ENCODE measurements at regions of chr2 and their contacts with region 1.

Region 1: GRCh38 chr2:84495539-84496146 is 20.7 kb upstream of the DNAH6 start:
- DNase-seq: no peak
- H3K4me3 ChIP-seq: no peak overlapping the region
- H3K27ac ChIP-seq: no peak overlapping the region
- H3K4me1 ChIP-seq: no peaks in the 10 kb centered on the region
- H3K27me3 ChIP-seq: no peaks in the 10 kb centered on the region
- CTCF ChIP-seq: peak; percentile 39 to 60 (median 47)

Region 2: GRCh38 chr2:83900862-83901261 is 594.8 kb before region 1 on chr2:
- intact Hi-C with region 1: no loop called
- DNase-seq: no peak
- H3K4me3 ChIP-seq: no peak overlapping the region
- H3K27ac ChIP-seq: no peak overlapping the region
- H3K4me1 ChIP-seq: no peaks in the 10 kb centered on the region
- H3K27me3 ChIP-seq: no peaks in the 10 kb centered on the region
- CTCF ChIP-seq: no peak

Region 3: GRCh38 chr2:84532291-84532690 is 36.6 kb after region 1 on chr2:
- intact Hi-C with region 1: no loop called
- DNase-seq: no peak
- H3K4me3 ChIP-seq: no peak overlapping the region
- H3K27ac ChIP-seq: no peak overlapping the region
- H3K4me1 ChIP-seq: no peaks in the 10 kb centered on the region
- H3K27me3 ChIP-seq: no peaks in the 10 kb centered on the region
- CTCF ChIP-seq: no peak

Region 4: GRCh38 chr2:84631047-84631446 is 135.4 kb after region 1 on chr2:
- intact Hi-C with region 1: loop called (anchors 10 kb)
- DNase-seq: no peak
- H3K4me3 ChIP-seq: no peak overlapping the region
- H3K27ac ChIP-seq: no peak overlapping the region
- H3K4me1 ChIP-seq: no peaks in the 10 kb centered on the region
- H3K27me3 ChIP-seq: no peaks in the 10 kb centered on the region
- CTCF ChIP-seq: peak in 2 of 3 experiments; percentile 17 to 18

Region 5: DNA sequence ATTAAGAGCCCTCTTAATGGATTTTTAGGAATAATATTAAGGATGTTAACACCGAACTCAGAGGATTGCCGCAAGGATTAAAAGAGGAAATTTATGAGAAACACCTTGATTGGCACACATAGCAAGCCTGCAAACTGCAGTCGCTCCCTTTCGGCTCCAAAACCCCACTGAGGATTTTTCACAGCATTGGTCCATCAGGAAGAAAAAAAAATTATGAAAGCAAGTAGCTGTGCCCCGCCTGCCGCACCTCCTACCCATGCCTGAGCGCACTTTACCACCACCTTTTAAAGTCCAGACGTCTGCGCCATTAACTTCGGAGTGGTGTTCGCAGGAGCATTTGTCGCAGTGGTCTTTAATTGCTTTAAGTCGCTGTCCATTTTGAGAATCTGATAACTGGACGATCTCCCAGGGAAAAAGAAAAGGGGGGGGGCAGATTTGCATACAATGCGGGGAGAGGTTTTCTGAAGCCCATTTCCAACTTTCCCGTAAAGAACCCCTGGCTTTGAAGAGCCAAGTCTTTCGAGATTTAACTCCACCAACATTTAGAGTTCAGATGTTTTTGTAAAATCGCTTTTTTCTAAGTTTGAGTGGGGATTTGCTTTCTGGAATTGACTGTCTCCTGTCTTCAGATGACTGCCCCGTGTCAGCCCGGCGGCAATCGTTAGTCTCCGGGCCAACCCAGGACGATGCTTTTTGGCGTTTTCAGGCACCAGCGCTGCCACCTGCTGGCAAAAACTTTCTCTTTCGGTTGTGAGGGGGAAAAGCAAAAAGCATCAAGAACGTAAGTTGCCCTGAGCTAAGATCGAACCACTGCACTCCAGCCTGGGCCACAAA is 386.2 kb after region 1 on chr2:
- intact Hi-C with region 1: loop called (anchors 2 kb)
- DNase-seq: peak; percentile 22 to 88
- H3K4me3 ChIP-seq: peak overlapping the region; percentile 59 to 75
- H3K27ac ChIP-seq: no peak overlapping the region
- H3K4me1 ChIP-seq: peaks cover 2 to 25% of the 10 kb centered on the region in 2 donors
- H3K27me3 ChIP-seq: no peaks in the 10 kb centered on the region
- CTCF ChIP-seq: peak; percentile 52 to 67 (median 61)

Measured in ascending aorta (tissue), 2 donors.